OCI-LY7 (cell line): ENCODE measurements at regions of chr4 and their contacts with region 1.

Region 1: DNA sequence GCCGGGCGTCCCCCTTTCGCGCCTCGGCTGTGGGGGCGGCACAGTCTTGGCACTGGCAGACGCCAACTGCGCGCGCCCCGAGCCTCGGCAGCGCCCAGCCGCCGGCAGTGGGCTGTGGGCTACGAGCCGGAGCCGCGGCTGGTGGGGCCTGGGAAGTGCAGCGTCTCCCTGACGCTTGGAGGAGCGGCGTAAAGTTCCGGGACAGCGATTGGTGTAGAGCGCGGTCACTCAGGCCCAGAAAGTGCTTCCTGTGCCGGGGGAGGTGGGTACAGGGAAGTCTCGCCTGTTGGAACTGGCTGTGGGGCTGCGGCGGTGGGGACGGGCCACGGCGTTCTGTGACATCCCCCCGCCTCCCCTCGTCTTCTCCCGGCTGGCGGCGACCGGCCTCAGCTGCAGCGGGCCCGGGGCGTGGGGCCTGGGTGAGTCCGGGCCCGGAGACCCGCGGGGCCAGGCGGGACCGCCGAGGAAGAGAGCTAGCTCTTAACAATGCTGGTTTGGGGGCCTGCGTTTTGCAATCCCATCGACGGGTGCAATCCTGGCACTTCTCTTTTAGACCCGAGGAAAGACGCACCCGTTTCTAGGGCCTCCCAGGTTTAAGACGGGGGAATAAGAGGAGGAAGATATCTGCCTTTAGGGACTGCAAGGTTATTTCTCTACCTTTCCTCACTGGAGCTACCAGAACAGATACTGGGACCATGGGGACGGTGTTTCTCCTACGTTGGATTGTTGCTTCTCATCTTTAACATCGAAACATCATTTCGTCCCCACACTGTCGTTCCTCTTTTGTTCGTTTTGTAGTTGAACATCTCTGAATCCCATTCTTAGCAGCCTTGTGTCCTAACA is at the starts of genes RWDD4 and TRAPPC11:
- DNase-seq: peak; percentile 96
- H3K4me3 ChIP-seq: peak within 1 kb of the TSS; percentile 77
- H3K27ac ChIP-seq: peak within 1 kb of the TSS; percentile 50
- H3K4me1 ChIP-seq: peaks cover 18% of the 10 kb centered on the region
- CTCF ChIP-seq: no peak
- total RNA-seq, gene RWDD4: 14.4 and 20.4 TPM in 2 replicates
- total RNA-seq, gene TRAPPC11: 27.8 and 35.9 TPM in 2 replicates

Region 2: DNA sequence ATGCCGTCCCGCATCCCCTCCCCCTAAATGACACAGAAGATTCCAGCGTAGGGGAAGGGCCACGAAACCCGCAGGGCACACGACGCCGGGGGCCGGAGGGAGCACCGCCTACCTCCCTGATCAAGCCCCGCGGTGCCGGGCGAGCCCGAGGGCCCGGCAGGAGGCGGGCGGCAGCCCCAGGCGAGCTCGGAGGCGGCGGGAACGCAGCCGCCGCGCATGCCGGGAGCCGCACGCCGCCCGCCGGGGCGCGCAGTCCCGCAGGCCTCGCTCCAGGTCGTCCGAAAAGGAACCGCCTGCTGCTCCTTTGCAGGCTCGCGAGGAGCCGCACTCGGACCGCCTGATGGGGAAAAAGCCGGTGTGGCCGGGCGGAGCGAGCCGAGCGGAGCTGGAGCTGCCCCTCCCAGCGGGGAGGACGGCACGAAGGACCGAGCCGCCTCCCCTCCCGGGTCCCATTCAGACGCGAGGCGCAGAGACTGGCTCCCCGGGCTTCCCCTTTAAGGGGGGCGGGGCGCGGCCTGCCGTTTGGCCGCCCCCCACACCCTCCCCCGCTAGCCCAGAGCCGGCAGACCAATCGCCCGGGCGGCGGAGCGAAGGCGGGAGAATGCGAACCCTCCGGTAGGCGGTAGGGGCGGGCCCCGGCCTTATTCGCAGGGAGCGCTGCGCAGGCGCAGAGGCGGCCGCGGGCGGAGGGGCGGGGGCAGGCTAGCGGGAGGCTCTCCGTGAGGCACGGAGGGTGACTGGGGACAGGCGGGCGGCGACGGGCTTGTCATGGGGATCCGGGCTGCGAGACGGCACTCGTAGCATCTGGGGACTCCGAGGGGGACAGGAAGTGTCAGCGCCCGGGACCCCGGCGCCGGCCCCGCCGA is 155.0 kb before region 1 on chr4:
- CTCF ChIA-PET with region 1: no interaction called
- POLR2A ChIA-PET with region 1: interaction called, 4 read pairs
- intact Hi-C with region 1: loop called (anchors 1 kb)
- DNase-seq: peak; percentile 98
- H3K4me3 ChIP-seq: peak overlapping the region; percentile 100
- H3K27ac ChIP-seq: peak overlapping the region; percentile 89
- H3K4me1 ChIP-seq: peaks cover 23% of the 10 kb centered on the region
- CTCF ChIP-seq: no peak

Region 3: GRCh38 chr4:183541010-183541751 is 118.1 kb before region 1 on chr4:
- CTCF ChIA-PET with region 1: no interaction called
- POLR2A ChIA-PET with region 1: no interaction called
- intact Hi-C with region 1: no loop called
- DNase-seq: no peak
- H3K4me3 ChIP-seq: no peak overlapping the region
- H3K27ac ChIP-seq: no peak overlapping the region
- H3K4me1 ChIP-seq: no peaks in the 10 kb centered on the region
- CTCF ChIP-seq: no peak

Region 4: DNA sequence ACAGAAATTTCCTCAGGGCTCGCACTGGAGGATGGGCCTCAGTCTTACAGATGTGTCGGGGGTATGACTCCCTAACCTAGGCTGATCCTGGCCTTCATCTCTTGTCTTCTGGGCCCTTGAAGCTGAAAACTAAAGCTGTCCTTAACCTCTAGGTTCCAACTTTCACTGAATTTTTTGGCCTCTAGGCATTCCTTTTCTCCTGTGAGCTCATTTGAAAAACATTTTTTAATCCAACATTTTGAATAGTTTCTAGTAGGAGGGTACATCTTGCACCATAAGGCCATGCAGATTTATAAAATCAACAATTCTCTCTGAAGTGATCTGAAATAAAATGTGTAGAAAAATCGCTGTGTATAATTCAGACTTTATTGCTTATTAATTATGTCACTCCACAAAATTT is 20.0 kb before region 1 on chr4:
- CTCF ChIA-PET with region 1: no interaction called
- POLR2A ChIA-PET with region 1: no interaction called
- intact Hi-C with region 1: no loop called
- DNase-seq: no peak
- H3K4me3 ChIP-seq: no peak overlapping the region
- H3K27ac ChIP-seq: no peak overlapping the region
- H3K4me1 ChIP-seq: no peaks in the 10 kb centered on the region
- CTCF ChIP-seq: no peak

Region 5: DNA sequence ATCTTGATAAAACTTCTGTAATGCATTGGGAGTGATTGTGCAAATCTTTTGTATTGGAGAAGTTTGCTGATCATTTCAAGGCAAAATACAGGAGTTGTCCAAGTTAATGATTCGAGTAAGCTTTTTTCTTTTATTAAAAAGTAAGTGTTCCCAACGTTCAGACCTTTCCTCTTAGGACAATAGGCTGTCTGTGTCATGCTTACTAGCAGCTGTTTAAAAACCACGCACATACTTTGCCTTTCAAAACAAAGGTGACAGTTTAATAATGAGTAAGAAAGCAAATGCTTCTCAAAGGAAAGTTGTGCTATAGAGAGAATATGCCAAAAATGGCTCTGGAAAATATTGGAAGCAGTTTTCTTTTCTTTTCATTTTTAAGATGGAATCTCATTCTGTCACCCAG is 11.0 kb after region 1 on chr4:
- CTCF ChIA-PET with region 1: no interaction called
- POLR2A ChIA-PET with region 1: interaction called, 10 read pairs
- intact Hi-C with region 1: no loop called
- DNase-seq: no peak
- H3K4me3 ChIP-seq: no peak overlapping the region
- H3K27ac ChIP-seq: no peak overlapping the region
- H3K4me1 ChIP-seq: no peaks in the 10 kb centered on the region
- CTCF ChIP-seq: no peak